ENCODE measurements at regions of chr16 and their contacts with region 1.

Region 1: GRCh38 chr16:68264128-68265077 is at the start of gene SLC7A6:
- DNase-seq: peak; percentile 84 to 94
- ATAC-seq: peak; percentile 72 to 73
- H3K4me3 ChIP-seq: peak within 1 kb of the TSS; percentile 85
- H3K27ac ChIP-seq: peak within 1 kb of the TSS; percentile 94 to 97
- H3K4me1 ChIP-seq: peaks cover 41% of the 10 kb centered on the region
- CTCF ChIP-seq: peak; percentile 81
- EP300 ChIP-seq: no peak; a peak in 1 of 5 replicates
- POLR2A ChIP-seq: peak; percentile 79
- RAD21 ChIP-seq: peak; percentile 14 to 40; a peak in 2 of 5 replicates
- polyA plus RNA-seq, gene SLC7A6: 32.9 and 45.3 TPM in 2 replicates

Region 2: DNA sequence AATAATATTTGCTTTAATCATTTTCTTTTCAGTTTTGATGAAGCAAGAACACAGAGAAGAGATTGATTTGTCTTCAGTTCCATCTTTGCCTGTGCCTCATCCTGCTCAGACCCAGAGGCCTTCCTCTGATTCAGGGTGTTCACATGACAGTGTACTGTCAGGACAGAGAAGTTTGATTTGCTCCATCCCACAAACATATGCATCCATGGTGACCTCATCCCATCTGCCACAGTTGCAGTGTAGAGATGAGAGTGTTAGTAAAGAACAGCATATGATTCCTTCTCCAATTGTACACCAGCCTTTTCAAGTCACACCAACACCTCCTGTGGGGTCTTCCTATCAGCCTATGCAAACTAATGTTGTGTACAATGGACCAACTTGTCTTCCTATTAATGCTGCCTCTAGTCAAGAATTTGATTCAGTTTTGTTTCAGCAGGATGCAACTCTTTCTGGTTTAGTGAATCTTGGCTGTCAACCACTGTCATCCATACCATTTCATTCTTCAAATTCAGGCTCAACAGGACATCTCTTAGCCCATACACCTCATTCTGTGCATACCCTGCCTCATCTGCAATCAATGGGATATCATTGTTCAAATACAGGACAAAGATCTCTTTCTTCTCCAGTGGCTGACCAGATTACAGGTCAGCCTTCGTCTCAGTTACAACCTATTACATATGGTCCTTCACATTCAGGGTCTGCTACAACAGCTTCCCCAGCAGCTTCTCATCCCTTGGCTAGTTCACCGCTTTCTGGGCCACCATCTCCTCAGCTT is 73.5 kb before region 1 on chr16:
- CTCF ChIA-PET with region 1: no interaction called
- POLR2A ChIA-PET with region 1: no interaction called
- DNase-seq: no peak
- ATAC-seq: no peak
- H3K4me3 ChIP-seq: no peak overlapping the region
- H3K27ac ChIP-seq: no peak overlapping the region
- H3K4me1 ChIP-seq: no peaks in the 10 kb centered on the region
- CTCF ChIP-seq: no peak
- EP300 ChIP-seq: no peak
- POLR2A ChIP-seq: no peak
- RAD21 ChIP-seq: no peak

Region 3: DNA sequence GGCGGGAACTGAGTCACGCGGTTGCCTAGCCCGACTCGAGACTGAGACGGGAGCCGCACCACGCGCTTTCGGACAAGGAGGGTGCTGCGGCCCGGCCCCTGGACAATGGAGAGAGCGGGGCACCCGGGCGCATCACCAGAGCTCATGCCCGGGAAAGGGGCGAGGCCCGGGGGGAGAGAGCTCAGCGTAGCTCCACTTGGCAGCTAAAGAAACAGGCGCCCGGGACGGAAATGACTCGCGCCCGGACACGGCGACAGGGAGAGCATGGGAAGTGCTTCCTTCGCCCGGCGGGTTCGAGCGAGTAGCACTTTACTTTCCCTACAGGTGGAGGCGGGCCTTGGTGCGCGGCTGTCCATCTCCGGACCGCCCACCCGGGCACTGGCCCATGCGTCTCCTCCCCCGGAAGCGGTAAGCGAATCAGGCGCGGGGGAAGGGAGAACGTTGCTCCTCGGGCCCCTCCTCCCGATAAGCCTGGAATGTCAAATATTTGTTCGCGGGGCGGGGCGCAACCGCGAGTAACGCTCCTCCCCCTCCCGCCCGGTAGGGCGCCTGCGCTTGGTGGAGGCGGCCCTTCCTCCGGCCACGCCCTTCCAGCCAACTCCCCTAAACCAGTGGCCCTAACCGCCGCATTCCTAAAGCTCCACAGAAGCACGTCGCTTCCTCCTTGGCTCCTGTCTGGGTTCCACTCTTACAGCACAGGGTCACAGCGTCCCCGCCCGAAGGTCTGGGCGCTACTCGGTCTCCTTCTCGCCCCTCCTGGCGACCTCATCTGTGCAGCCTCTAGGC is 27.0 kb before region 1 on chr16:
- CTCF ChIA-PET with region 1: interaction called, 95 read pairs
- POLR2A ChIA-PET with region 1: interaction called, 29 read pairs
- DNase-seq: peak; percentile 95 to 99
- ATAC-seq: peak; percentile 85 to 94
- H3K4me3 ChIP-seq: peak overlapping the region; percentile 48
- H3K27ac ChIP-seq: peak overlapping the region; percentile 93 to 94
- H3K4me1 ChIP-seq: peaks cover 15% of the 10 kb centered on the region
- CTCF ChIP-seq: no peak
- EP300 ChIP-seq: no peak
- POLR2A ChIP-seq: peak; percentile 97
- RAD21 ChIP-seq: no peak

Region 4: GRCh38 chr16:68275611-68276191 is 11.3 kb after region 1 on chr16:
- CTCF ChIA-PET with region 1: interaction called, 89 read pairs
- POLR2A ChIA-PET with region 1: interaction called, 9 read pairs
- DNase-seq: no peak
- ATAC-seq: no peak
- H3K4me3 ChIP-seq: no peak overlapping the region
- H3K27ac ChIP-seq: 0 out of 6 replicates have a peak overlapping the region, but pooled peaks of 1 of the 2 experiments have one; percentile 2
- H3K4me1 ChIP-seq: peaks cover 7% of the 10 kb centered on the region; the same call in 2 of the 3 replicates
- CTCF ChIP-seq: no peak
- EP300 ChIP-seq: no peak
- POLR2A ChIP-seq: no peak
- RAD21 ChIP-seq: no peak

Region 5: DNA sequence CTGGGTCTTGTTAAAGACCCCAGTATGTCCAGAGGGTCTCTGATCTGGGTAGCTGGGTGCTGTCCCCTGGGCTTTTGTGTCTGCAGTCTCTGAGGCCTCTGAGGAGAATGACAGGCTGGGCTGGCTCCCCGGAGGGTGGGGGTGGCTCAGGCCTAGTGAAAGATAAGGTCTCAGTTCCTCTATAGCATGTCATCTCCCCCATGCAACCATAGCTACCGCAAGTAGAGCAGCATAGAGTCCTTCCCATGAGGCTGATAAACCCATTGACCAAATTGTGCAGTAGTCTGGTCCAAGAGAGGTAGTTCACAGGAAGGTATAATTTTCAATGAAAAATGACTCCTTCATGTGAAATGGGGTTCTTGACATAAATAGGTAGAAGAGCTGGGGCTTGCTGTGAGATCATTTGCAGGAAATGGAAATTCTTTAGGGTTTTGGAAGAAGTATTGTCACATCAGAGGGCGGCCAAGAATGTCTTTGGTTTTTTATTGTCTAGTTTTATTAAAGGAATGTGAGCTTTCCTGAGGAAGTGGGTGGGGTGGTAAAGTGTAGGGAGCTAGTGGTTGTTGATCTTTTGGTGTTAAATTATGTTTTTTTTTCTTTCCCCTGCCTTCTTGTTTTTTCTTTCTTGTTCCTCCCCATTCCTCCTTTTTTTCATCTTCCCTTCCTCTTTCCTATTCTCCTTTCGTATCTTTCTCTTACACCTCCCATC is 25.4 kb after region 1 on chr16:
- CTCF ChIA-PET with region 1: interaction called, 42 read pairs
- POLR2A ChIA-PET with region 1: interaction called, 7 read pairs
- DNase-seq: no peak
- ATAC-seq: no peak; a peak in 1 of 6 replicates
- H3K4me3 ChIP-seq: no peak overlapping the region
- H3K27ac ChIP-seq: no peak overlapping the region
- H3K4me1 ChIP-seq: peaks cover 15% of the 10 kb centered on the region
- CTCF ChIP-seq: no peak
- EP300 ChIP-seq: no peak
- POLR2A ChIP-seq: no peak
- RAD21 ChIP-seq: no peak

Region 6: GRCh38 chr16:68310761-68311511 is 46.5 kb after region 1 on chr16 and contains the starts of genes PRMT7 and SLC7A6OS:
- CTCF ChIA-PET with region 1: interaction called, 20 read pairs
- POLR2A ChIA-PET with region 1: interaction called, 47 read pairs
- DNase-seq: peak; percentile 89 to 98
- ATAC-seq: peak; percentile 99 to 100
- H3K4me3 ChIP-seq: peak within 1 kb of the TSS; percentile 91
- H3K27ac ChIP-seq: peak within 1 kb of the TSS; percentile 83 to 90
- H3K4me1 ChIP-seq: peaks cover 21% of the 10 kb centered on the region
- CTCF ChIP-seq: no peak
- EP300 ChIP-seq: no peak
- POLR2A ChIP-seq: peak; percentile 91
- RAD21 ChIP-seq: no peak
- polyA plus RNA-seq, gene PRMT7: 37.1 and 37.6 TPM in 2 replicates
- polyA plus RNA-seq, gene SLC7A6OS: 11.0 and 11.9 TPM in 2 replicates

Region 7: GRCh38 chr16:68338326-68339119 is 74.1 kb after region 1 on chr16:
- CTCF ChIA-PET with region 1: interaction called, 335 read pairs
- POLR2A ChIA-PET with region 1: interaction called, 6 read pairs
- DNase-seq: no peak
- ATAC-seq: no peak; a peak in 1 of 6 replicates
- H3K4me3 ChIP-seq: no peak overlapping the region
- H3K27ac ChIP-seq: no peak overlapping the region
- H3K4me1 ChIP-seq: no peaks in the 10 kb centered on the region
- CTCF ChIP-seq: no peak
- EP300 ChIP-seq: no peak
- POLR2A ChIP-seq: no peak
- RAD21 ChIP-seq: no peak

Measured in A549 (cell line).